ENCODE measurements at regions of chr7 and their contacts with region 1.

Region 1: GRCh38 chr7:138008547-138009349 is 6.9 kb upstream of the CREB3L2 start:
- DNase-seq: peak; percentile 29
- ATAC-seq: peak; percentile 53
- H3K4me3 Mint-ChIP-seq: no peak overlapping the region
- H3K27ac Mint-ChIP-seq: no peak overlapping the region
- H3K4me1 Mint-ChIP-seq: peaks cover 3% of the 10 kb centered on the region
- H3K27me3 Mint-ChIP-seq: peaks cover 2% of the 10 kb centered on the region

Region 2: DNA sequence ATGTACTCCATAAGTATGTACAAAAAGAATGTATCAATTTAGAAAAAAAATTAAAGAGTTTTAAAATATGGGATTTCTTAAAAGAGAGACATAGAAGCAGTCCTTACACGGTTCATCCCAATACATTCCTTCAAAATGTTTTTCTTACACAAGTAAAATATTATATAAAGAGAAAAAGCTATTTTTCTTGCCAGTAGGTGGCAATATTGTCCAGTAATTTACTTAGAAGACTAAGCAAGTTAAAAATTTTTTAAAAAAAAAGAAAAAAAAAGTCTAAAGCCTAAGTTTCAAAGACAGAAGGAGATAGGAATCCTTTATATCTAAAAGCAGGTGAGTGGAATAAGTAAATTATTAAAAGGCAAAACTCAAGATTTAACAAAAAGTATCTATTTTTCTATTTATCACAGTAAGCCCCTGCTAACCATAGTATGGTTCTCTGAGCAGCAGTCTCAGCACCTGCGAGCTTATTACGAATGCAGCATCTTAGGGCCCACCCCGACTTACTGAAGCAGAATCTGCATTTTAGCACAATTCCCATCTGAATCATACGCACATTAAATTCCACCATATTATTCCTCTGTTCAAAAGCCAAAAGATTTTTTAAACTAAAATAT is 402.6 kb before region 1 on chr7:
- CTCF ChIA-PET with region 1: no interaction called
- POLR2A ChIA-PET with region 1: no interaction called
- intact Hi-C with region 1: loop called in 1 of 2 experiments (anchors 2 kb)
- DNase-seq: no peak
- ATAC-seq: no peak
- H3K4me3 Mint-ChIP-seq: no peak overlapping the region
- H3K27ac Mint-ChIP-seq: no peak overlapping the region
- H3K4me1 Mint-ChIP-seq: no peaks in the 10 kb centered on the region
- H3K27me3 Mint-ChIP-seq: peaks cover 11% of the 10 kb centered on the region

Region 3: DNA sequence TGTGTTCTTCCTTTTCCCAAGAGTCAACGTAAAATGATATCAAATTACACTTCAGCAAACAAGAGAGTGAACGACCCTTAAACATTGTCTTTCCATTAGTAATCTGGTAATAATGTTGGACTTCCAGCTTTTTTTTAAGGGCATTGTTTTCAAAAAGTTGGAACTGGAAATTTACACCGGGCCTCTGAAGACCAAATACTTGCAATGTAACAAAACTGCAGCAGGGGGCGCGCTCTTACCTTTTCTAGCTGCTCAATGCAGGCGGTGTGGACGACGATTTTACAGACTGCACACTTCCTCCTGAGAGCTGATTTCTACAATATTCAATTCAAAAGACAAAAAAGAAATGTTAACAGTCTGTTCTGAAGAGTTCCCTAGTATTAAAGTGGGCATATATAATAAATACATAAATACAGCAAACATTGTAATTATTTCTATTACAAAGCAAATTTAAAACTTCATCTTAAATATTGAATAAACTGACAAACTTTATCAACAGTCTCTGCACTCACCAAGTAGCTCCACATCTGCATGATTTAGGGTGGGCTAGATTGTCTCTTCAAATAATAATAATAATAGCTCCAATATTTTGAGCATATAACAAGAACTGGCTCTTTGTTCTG is 352.4 kb before region 1 on chr7:
- CTCF ChIA-PET with region 1: interaction called, 12 read pairs
- POLR2A ChIA-PET with region 1: no interaction called
- intact Hi-C with region 1: loop called (anchors 1 to 2 kb)
- DNase-seq: peak; percentile 85
- ATAC-seq: peak; percentile 77
- H3K4me3 Mint-ChIP-seq: no peak overlapping the region
- H3K27ac Mint-ChIP-seq: no peak overlapping the region
- H3K4me1 Mint-ChIP-seq: no peaks in the 10 kb centered on the region
- H3K27me3 Mint-ChIP-seq: peaks cover 14% of the 10 kb centered on the region

Region 4: GRCh38 chr7:137670199-137671071 is 338.3 kb before region 1 on chr7:
- CTCF ChIA-PET with region 1: interaction called, 3 read pairs
- POLR2A ChIA-PET with region 1: interaction called, 12 read pairs
- intact Hi-C with region 1: no loop called
- DNase-seq: peak; percentile 9
- ATAC-seq: peak; percentile 39
- H3K4me3 Mint-ChIP-seq: no peak overlapping the region
- H3K27ac Mint-ChIP-seq: no peak overlapping the region
- H3K4me1 Mint-ChIP-seq: no peaks in the 10 kb centered on the region
- H3K27me3 Mint-ChIP-seq: peaks cover 16% of the 10 kb centered on the region

Measured in activated CD4-positive, alpha-beta T cell treated with anti-CD3 and anti-CD28 coated beads for 36 hours (primary cell).